T-cell (primary cell): ENCODE measurements at regions of chr16 and their contacts with region 1.

Region 1: GRCh38 chr16:324451-325334 is 27.8 kb downstream of the AXIN1 start:
- DNase-seq: peak; percentile 46 to 90 (median 84)
- ATAC-seq: peak; percentile 84 to 89 (median 84)
- H3K4me3 ChIP-seq: peak overlapping the region; percentile 53 to 60
- H3K4me3 Mint-ChIP-seq: peak overlapping the region; percentile 67 to 80 (median 70)
- H3K27ac ChIP-seq: peak overlapping the region; percentile 84
- H3K27ac Mint-ChIP-seq: peak overlapping the region; percentile 80 to 91
- H3K4me1 ChIP-seq: peaks cover 23 to 81% of the 10 kb centered on the region in 2 experiments
- H3K4me1 Mint-ChIP-seq: peaks cover 64 to 75% (median 68%) of the 10 kb centered on the region in 3 donors
- H3K27me3 ChIP-seq: no peaks in the 10 kb centered on the region
- H3K27me3 Mint-ChIP-seq: no peaks in the 10 kb centered on the region

Region 2: DNA sequence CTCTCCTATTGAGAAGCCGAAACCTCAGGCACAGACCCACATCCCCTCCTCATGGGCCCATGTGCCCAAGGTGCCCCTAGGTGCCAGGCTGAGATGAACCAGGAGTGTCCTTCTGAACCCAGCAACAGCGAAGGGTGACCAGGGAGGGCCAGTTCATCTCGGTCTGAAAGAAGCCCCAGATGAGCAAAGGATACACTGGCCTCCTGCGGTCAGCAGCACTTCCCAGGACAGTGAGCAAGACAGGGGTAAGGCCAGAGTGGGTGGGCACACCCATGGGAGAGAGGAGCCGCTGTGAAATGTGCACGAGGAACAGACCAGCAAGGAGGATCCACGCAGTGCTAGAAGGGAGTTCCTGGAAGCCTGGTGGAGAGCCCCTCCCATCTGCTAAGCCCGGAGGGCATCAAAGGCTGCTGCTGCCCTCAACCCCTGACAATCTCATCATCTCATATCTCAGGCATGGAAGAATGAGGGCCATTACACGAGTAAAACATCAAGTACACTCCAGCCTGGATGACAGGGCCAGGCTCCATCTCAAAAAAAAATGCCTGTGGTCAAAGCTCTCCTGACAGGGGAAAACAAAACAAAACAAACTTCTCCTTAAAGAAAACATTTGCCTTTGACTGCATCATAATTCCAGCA is 175.6 kb before region 1 on chr16:
- CTCF ChIA-PET with region 1: no interaction called
- POLR2A ChIA-PET with region 1: no interaction called
- DNase-seq: no peak
- ATAC-seq: no peak
- H3K4me3 ChIP-seq: no peak overlapping the region
- H3K4me3 Mint-ChIP-seq: no peak overlapping the region
- H3K27ac ChIP-seq: no peak overlapping the region
- H3K27ac Mint-ChIP-seq: no peak overlapping the region
- H3K4me1 ChIP-seq: peaks cover 0 to under 1% of the 10 kb centered on the region in 2 experiments
- H3K4me1 Mint-ChIP-seq: peaks cover 0 to under 1% (median 0%) of the 10 kb centered on the region in 3 donors
- H3K27me3 ChIP-seq: peaks cover 5 to 28% of the 10 kb centered on the region in 2 experiments
- H3K27me3 Mint-ChIP-seq: peaks cover 7 to 31% of the 10 kb centered on the region in 2 donors

Region 3: GRCh38 chr16:337437-337836 is 12.7 kb after region 1 on chr16:
- CTCF ChIA-PET with region 1: no interaction called
- POLR2A ChIA-PET with region 1: interaction called in 1 of 2 experiments, 14 read pairs
- DNase-seq: no peak
- ATAC-seq: no peak
- H3K4me3 ChIP-seq: no peak overlapping the region
- H3K4me3 Mint-ChIP-seq: no peak overlapping the region
- H3K27ac ChIP-seq: no peak overlapping the region
- H3K27ac Mint-ChIP-seq: no peak overlapping the region
- H3K4me1 ChIP-seq: peaks cover 13 to 70% of the 10 kb centered on the region in 2 experiments
- H3K4me1 Mint-ChIP-seq: peaks cover 62 to 79% (median 79%) of the 10 kb centered on the region in 3 donors
- H3K27me3 ChIP-seq: no peaks in the 10 kb centered on the region
- H3K27me3 Mint-ChIP-seq: no peaks in the 10 kb centered on the region

Region 4: GRCh38 chr16:370443-370842 is 45.8 kb after region 1 on chr16 and contains the start of gene MRPL28:
- CTCF ChIA-PET with region 1: no interaction called
- POLR2A ChIA-PET with region 1: no interaction called
- DNase-seq: peak; percentile 82 to 96 (median 90)
- ATAC-seq: peak; percentile 95 to 99 (median 98)
- H3K4me3 ChIP-seq: peak within 1 kb of the TSS; percentile 26 to 29
- H3K4me3 Mint-ChIP-seq: peak within 1 kb of the TSS; percentile 88 to 90 (median 90)
- H3K27ac ChIP-seq: peak within 1 kb of the TSS; percentile 52
- H3K27ac Mint-ChIP-seq: peak within 1 kb of the TSS; percentile 92 to 94
- H3K4me1 ChIP-seq: peaks cover 2 to 28% of the 10 kb centered on the region in 2 experiments
- H3K4me1 Mint-ChIP-seq: peaks cover 15 to 24% (median 18%) of the 10 kb centered on the region in 3 donors
- H3K27me3 ChIP-seq: no peaks in the 10 kb centered on the region
- H3K27me3 Mint-ChIP-seq: no peaks in the 10 kb centered on the region
- total RNA-seq, gene MRPL28: 29.3 to 43.8 (median 34.5) TPM